ENCODE measurements at regions of chr2 and their contacts with region 1.

Region 1: DNA sequence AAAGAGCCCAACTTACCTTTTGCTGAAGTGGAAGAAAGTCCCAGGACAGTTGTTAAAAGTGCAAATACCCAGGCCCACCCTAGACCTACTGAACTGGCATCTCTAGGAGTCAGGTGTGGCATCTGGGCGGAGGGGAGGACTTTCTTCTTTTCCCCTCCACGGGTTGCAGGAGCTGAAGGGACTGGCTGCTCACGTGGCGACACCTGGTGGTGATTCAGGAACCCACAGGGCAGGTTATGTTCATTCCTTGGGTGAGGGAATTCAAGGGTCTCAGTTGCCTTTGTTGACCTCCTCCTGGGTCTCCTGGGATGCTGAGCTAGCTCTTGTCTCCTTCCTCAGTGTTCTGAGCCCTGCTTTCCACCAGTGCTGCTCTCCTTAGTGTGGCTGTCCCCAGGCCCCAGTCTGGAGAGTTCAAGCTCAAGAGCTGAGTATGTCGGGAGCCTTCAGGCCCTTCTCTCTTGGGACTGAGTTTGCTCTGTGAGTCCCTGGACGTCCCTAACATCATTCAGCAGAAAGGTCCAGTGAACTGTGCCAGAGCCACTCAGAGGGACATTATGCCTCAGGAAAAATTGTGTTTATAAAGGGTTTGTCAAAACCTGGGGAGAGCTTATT is 56.9 kb downstream of the DYSF start:
- DNase-seq: peak; percentile 42 to 82 (median 72)
- ATAC-seq: peak; percentile 62
- H3K4me3 ChIP-seq: no peak overlapping the region
- H3K4me3 Mint-ChIP-seq: no peak overlapping the region
- H3K27ac ChIP-seq: no peak overlapping the region
- H3K27ac Mint-ChIP-seq: no peak overlapping the region
- H3K4me1 ChIP-seq: no peaks in the 10 kb centered on the region
- H3K4me1 Mint-ChIP-seq: peaks cover 2% of the 10 kb centered on the region
- H3K27me3 ChIP-seq: peaks cover 0 to 3% of the 10 kb centered on the region in 2 experiments
- H3K27me3 Mint-ChIP-seq: peaks cover 2% of the 10 kb centered on the region
- CTCF ChIP-seq: peak; percentile 87

Region 2: DNA sequence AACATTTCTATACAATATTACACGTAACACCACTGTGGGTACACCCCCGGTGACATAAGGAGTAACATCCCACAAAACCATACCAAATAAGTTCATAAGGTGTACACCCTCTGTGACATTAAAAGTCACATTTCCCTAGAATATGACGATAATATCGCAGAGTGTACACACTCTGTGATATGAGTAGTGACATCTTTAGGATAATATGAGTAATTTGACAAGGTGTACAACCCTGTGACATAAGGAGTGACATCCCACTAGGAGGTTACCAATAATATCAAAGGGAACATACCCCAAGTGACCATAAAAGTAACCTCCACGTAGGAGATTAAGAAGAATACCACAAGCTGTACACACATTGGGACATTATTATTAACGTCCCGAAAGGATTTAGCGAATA is 491.7 kb before region 1 on chr2:
- CTCF ChIA-PET with region 1: no interaction called
- POLR2A ChIA-PET with region 1: no interaction called
- intact Hi-C with region 1: loop called (anchors 2 to 5 kb)
- DNase-seq: no peak
- ATAC-seq: no peak
- H3K4me3 ChIP-seq: no peak overlapping the region
- H3K4me3 Mint-ChIP-seq: no peak overlapping the region
- H3K27ac ChIP-seq: no peak overlapping the region
- H3K27ac Mint-ChIP-seq: no peak overlapping the region
- H3K4me1 ChIP-seq: no peaks in the 10 kb centered on the region
- H3K4me1 Mint-ChIP-seq: peaks cover 3% of the 10 kb centered on the region
- H3K27me3 ChIP-seq: no peaks in the 10 kb centered on the region
- H3K27me3 Mint-ChIP-seq: no peaks in the 10 kb centered on the region
- CTCF ChIP-seq: no peak

Region 3: DNA sequence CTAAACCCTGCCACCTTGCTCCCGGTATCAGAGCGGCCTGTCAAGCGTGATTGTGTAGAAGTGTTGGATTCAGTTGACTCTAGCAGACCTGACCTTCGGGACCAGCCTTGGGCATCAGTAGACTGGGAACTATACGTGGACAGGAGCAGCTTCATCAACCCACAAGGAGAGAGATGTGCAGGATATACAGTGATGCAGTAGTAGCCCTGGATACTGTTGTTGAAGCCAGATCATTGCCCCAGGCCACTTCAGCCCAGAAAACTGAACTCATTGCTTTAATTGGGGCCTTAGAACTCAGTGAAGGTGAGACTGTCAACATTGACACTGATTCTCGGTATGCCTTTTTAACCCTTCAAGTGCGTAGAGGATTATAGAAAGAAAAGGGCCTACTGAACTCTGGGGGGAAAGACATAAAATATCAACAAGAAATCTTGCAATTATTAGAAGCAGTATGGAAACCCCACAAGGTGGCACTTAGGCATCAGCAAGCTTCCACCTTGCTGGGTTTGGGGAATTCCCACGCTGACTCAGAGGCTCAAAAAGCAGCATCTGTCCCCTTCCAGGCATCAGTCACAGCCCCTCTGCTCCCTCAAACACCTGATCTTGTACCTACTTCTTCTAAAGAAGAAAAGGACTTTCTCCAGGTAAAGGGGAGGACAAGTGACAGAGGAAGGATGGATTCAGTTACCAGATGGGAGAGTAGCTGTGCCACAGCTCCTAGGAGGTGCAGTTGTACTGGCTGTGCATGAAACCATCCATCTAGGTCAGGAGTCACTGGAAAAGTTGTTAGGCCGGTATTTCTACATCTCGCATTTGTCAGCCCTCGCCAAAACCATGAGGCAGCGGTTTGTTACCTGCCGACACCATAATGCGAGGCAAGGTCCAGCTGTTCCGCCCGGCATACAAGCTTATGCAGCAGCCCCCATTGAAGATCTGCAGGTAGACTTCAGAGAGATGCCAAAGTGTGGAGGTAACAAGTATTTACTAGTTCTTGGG is 460.6 kb before region 1 on chr2:
- CTCF ChIA-PET with region 1: no interaction called
- POLR2A ChIA-PET with region 1: no interaction called
- intact Hi-C with region 1: no loop called
- DNase-seq: peak in 4 of 9 experiments; percentile 43 to 61 (median 46)
- ATAC-seq: peak; percentile 44
- H3K4me3 ChIP-seq: no peak overlapping the region
- H3K4me3 Mint-ChIP-seq: no peak overlapping the region
- H3K27ac ChIP-seq: no peak overlapping the region
- H3K27ac Mint-ChIP-seq: no peak overlapping the region
- H3K4me1 ChIP-seq: no peaks in the 10 kb centered on the region
- H3K4me1 Mint-ChIP-seq: no peaks in the 10 kb centered on the region
- H3K27me3 ChIP-seq: no peaks in the 10 kb centered on the region
- H3K27me3 Mint-ChIP-seq: no peaks in the 10 kb centered on the region
- CTCF ChIP-seq: no peak

Region 4: GRCh38 chr2:71157124-71157793 is 353.0 kb before region 1 on chr2:
- CTCF ChIA-PET with region 1: interaction called, 16 read pairs
- POLR2A ChIA-PET with region 1: no interaction called
- intact Hi-C with region 1: loop called in 1 of 2 experiments (anchors 1 kb)
- DNase-seq: peak; percentile 38 to 73 (median 59)
- ATAC-seq: peak; percentile 70
- H3K4me3 ChIP-seq: no peak overlapping the region
- H3K4me3 Mint-ChIP-seq: no peak overlapping the region
- H3K27ac ChIP-seq: no peak overlapping the region
- H3K27ac Mint-ChIP-seq: no peak overlapping the region
- H3K4me1 ChIP-seq: no peaks in the 10 kb centered on the region
- H3K4me1 Mint-ChIP-seq: peaks cover 8% of the 10 kb centered on the region
- H3K27me3 ChIP-seq: peaks cover 0 to 2% of the 10 kb centered on the region in 2 experiments
- H3K27me3 Mint-ChIP-seq: peaks cover 10% of the 10 kb centered on the region
- CTCF ChIP-seq: peak; percentile 58

Region 5: GRCh38 chr2:71313016-71313766 is 197.1 kb before region 1 on chr2:
- CTCF ChIA-PET with region 1: interaction called, 11 read pairs
- POLR2A ChIA-PET with region 1: no interaction called
- intact Hi-C with region 1: no loop called
- DNase-seq: no peak
- ATAC-seq: no peak
- H3K4me3 ChIP-seq: no peak overlapping the region
- H3K4me3 Mint-ChIP-seq: no peak overlapping the region
- H3K27ac ChIP-seq: no peak overlapping the region
- H3K27ac Mint-ChIP-seq: no peak overlapping the region
- H3K4me1 ChIP-seq: no peaks in the 10 kb centered on the region
- H3K4me1 Mint-ChIP-seq: no peaks in the 10 kb centered on the region
- H3K27me3 ChIP-seq: no peaks in the 10 kb centered on the region
- H3K27me3 Mint-ChIP-seq: no peaks in the 10 kb centered on the region
- CTCF ChIP-seq: peak; percentile 30

Region 6: DNA sequence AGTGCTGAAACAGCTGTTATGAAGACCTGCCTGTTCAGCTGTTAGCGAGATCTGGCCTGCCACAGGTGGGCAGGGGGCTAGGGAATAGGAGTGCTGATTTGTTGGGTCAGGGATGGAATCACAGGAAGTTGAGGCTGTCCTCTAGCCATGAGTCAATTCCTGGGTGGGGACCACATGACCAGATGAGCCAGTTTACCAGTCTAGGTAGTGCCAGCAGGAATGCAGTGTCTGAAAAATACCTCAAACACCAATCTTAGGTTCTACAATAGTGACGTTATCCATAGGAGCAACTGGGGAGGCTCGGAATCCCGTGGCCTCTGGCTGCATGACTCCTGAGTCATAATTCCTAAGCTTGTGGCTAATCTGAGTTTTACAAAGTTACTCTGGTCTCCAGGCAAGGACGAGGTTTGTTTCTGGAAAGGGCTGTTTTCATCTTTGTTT is 12.0 kb before region 1 on chr2:
- CTCF ChIA-PET with region 1: interaction called, 15 read pairs
- POLR2A ChIA-PET with region 1: no interaction called
- intact Hi-C with region 1: no loop called
- DNase-seq: no peak
- ATAC-seq: no peak
- H3K4me3 ChIP-seq: no peak overlapping the region
- H3K4me3 Mint-ChIP-seq: no peak overlapping the region
- H3K27ac ChIP-seq: no peak overlapping the region
- H3K27ac Mint-ChIP-seq: no peak overlapping the region
- H3K4me1 ChIP-seq: no peaks in the 10 kb centered on the region
- H3K4me1 Mint-ChIP-seq: no peaks in the 10 kb centered on the region
- H3K27me3 ChIP-seq: no peaks in the 10 kb centered on the region
- H3K27me3 Mint-ChIP-seq: peaks cover under 1% of the 10 kb centered on the region
- CTCF ChIP-seq: no peak

Measured in CD8-positive, alpha-beta T cell (primary cell).